OCI-LY7 (cell line): ENCODE measurements at regions of chr17 and their contacts with region 1.

Region 1: DNA sequence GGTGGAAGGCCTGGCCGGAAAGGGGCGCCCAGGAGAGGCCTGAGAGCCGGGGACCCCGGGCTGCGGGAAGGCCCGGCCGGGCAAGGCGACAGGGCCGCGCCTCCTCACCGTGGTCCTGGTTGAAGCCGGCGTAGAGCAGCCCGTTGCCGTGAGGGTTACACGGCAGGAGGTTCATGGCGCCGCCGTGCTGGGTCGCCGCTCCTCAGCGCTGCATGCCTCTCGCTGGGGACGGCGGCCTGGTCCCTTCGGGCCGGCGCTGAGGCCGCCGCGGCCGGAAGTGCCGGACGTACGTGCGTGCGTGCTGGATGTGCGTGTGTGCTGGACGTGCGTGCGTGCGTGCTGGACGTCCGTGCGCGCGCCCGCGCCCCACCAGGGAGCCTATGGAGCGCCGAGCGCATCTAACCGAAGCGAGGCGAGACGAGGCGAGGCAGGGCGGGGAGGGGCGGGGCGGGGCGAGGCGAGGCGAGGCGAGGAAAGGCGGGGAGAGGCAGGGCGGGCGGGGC is at the start of gene WDR45B:
- DNase-seq: peak; percentile 99
- H3K4me3 ChIP-seq: peak within 1 kb of the TSS; percentile 90
- H3K27ac ChIP-seq: peak within 1 kb of the TSS; percentile 89
- H3K4me1 ChIP-seq: peaks cover 14% of the 10 kb centered on the region
- CTCF ChIP-seq: no peak
- total RNA-seq, gene WDR45B: 59.0 and 61.7 TPM in 2 replicates

Region 2: GRCh38 chr17:82716203-82717010 is 68.2 kb after region 1 on chr17 and contains the start of gene FN3KRP:
- CTCF ChIA-PET with region 1: no interaction called
- POLR2A ChIA-PET with region 1: interaction called, 3 read pairs
- intact Hi-C with region 1: loop called (anchors 5 kb)
- DNase-seq: peak; percentile 98
- H3K4me3 ChIP-seq: peak within 1 kb of the TSS; percentile 89
- H3K27ac ChIP-seq: peak within 1 kb of the TSS; percentile 40
- H3K4me1 ChIP-seq: peaks cover 24% of the 10 kb centered on the region
- CTCF ChIP-seq: no peak
- total RNA-seq, gene FN3KRP: 52.1 and 56.5 TPM in 2 replicates